ENCODE measurements at regions of chr4 and their contacts with region 1.

Region 1: GRCh38 chr4:150867148-150867547 is 147.9 kb downstream of the LRBA start:
- DNase-seq: no peak
- H3K4me3 Mint-ChIP-seq: no peak overlapping the region
- H3K27ac Mint-ChIP-seq: no peak overlapping the region
- H3K4me1 Mint-ChIP-seq: no peaks in the 10 kb centered on the region
- H3K27me3 Mint-ChIP-seq: no peaks in the 10 kb centered on the region

Region 2: GRCh38 chr4:149801416-149801815 is 1065.7 kb before region 1 on chr4:
- intact Hi-C with region 1: no loop called
- DNase-seq: no peak
- H3K4me3 Mint-ChIP-seq: no peak overlapping the region
- H3K27ac Mint-ChIP-seq: no peak overlapping the region
- H3K4me1 Mint-ChIP-seq: no peaks in the 10 kb centered on the region
- H3K27me3 Mint-ChIP-seq: no peaks in the 10 kb centered on the region

Region 3: GRCh38 chr4:149980941-149981340 is 886.2 kb before region 1 on chr4:
- intact Hi-C with region 1: loop called (anchors 2 kb)
- DNase-seq: no peak
- H3K4me3 Mint-ChIP-seq: no peak overlapping the region
- H3K27ac Mint-ChIP-seq: no peak overlapping the region
- H3K4me1 Mint-ChIP-seq: peaks cover 6% of the 10 kb centered on the region
- H3K27me3 Mint-ChIP-seq: peaks cover 6% of the 10 kb centered on the region